ENCODE measurements at regions of chr12 and their contacts with region 1.

Region 1: DNA sequence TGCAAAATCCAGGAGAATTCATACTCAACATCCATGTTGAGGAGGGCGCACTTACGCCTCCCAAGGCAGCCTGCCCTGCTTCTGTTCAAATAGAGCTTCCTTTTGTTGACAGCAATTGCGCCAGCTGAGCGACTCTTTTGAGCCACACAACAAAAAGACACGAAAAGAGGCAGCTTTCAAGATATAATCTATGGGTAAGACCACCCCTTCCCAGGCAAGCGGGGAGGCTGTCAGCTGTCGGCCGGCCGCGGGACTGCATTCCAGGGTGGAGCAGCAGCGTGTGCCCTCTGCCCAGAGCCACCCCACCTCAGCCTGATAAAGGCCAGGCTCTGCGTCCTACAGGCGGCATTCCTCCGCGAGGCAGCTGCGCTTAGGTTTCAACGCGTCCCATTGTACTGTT is 15.8 kb upstream of the STAB2 start:
- DNase-seq: no peak
- ATAC-seq: peak; percentile 83

Region 2: GRCh38 chr12:103369929-103370328 is 201.4 kb before region 1 on chr12:
- intact Hi-C with region 1: no loop called
- DNase-seq: no peak
- ATAC-seq: no peak

Region 3: GRCh38 chr12:103647267-103647666 is 76.0 kb after region 1 on chr12:
- intact Hi-C with region 1: no loop called
- DNase-seq: no peak
- ATAC-seq: no peak

Region 4: GRCh38 chr12:103742349-103742932 is 171.2 kb after region 1 on chr12:
- intact Hi-C with region 1: loop called (anchors 10 kb)
- DNase-seq: no peak
- ATAC-seq: peak; percentile 53

Measured in Right ventricle myocardium inferior (tissue), 1 donor.